Caco-2 (cell line): ENCODE measurements at regions of chr1 and their contacts with region 1.

Region 1: DNA sequence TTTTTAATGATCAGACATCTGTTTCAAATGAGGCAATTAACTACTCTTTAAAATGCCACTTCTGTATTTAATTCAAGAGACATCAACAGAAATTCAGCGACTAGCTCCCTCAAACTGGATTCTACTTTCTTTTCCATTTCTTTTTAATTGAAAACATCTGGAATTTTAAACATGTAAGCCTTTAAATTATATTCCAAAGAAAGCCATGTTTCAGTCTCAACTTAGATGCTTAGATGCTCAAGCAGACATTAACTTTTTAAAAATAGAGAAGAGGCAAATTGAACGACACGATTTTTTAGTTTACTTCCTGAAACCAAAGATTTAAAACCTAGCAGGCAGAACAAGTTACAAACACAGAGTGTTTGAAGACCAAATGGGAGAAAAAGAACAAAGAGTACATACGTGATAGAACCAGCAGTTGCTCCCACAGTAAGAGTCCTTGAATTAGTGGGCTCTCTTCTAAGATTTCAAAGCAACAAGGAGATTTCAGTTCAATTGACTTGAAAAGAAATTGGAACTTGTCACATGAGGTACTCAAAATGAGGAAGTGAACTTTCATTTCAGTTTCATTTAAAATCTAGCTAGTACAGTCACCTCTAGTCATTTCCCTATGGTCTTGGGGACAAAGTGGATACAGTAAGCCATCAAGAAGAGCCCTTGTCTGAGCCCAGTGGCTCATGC is at the start of gene CTSS:
- DNase-seq: no peak
- H3K4me3 ChIP-seq: no peak within 1 kb of the TSS
- H3K4me3 Mint-ChIP-seq: peak within 1 kb of the TSS; percentile 5
- H3K27ac Mint-ChIP-seq: no peak within 1 kb of the TSS
- H3K4me1 ChIP-seq: no peaks in the 10 kb centered on the region
- H3K4me1 Mint-ChIP-seq: no peaks in the 10 kb centered on the region
- H3K27me3 ChIP-seq: no peaks in the 10 kb centered on the region
- H3K27me3 Mint-ChIP-seq: no peaks in the 10 kb centered on the region
- CTCF ChIP-seq: no peak
- total RNA-seq, gene CTSS: 0.84 and 1.3 TPM in 2 replicates

Region 2: DNA sequence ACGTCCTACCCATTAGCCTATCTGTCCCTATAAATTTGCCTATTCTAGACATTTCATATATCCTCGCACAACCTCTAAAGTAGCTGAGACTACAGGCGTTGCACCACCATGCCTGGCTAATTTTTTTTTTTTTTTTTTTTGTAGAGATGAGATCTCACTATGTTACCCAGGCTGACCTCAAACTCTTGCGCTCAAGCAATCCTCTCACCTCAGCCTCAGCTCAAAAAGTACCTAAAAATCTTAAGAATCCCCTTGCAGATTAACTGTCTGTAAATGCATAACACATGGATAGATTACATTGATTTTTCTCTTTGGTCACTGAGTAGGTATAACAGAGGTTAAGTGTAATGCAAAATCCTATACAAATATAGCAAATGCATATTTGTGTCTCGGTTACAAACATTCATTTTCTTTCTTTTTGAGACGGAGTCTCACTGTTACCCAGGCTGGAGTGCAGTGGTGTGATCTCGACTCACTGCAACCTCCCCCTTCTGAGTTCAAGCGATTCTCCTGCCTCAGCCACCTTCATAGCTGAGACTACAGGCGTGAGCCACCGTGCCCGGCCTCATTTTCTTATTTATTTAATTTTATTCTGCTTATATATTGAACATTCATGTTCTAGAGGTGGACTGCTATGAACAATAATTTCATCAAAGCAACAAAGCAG is 47.1 kb before region 1 on chr1:
- CTCF ChIA-PET with region 1: no interaction called
- POLR2A ChIA-PET with region 1: no interaction called
- intact Hi-C with region 1: loop called (anchors 10 kb)
- DNase-seq: no peak
- H3K4me3 ChIP-seq: no peak overlapping the region
- H3K4me3 Mint-ChIP-seq: no peak overlapping the region
- H3K27ac Mint-ChIP-seq: no peak overlapping the region
- H3K4me1 ChIP-seq: no peaks in the 10 kb centered on the region
- H3K4me1 Mint-ChIP-seq: no peaks in the 10 kb centered on the region
- H3K27me3 ChIP-seq: no peaks in the 10 kb centered on the region
- H3K27me3 Mint-ChIP-seq: no peaks in the 10 kb centered on the region
- CTCF ChIP-seq: no peak

Region 3: DNA sequence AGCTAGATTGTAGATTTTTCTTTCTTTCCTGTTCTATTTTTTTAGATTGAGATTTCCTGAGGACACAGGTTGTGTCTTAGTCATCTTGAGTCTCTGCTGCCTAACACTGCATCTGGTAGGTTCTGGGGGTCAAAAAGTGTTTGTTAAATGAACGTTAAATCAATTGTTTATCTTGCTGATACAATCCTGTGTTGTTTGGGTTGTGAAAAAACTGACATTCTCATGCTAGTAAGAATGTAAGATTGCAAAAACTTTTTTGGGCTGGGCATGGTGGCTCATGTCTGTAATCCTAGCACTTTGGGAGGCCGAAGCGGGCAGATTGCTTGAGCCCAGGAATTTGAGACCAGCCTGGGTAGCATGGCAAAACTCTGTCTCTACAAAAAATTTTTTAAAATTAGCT is 39.2 kb after region 1 on chr1:
- CTCF ChIA-PET with region 1: no interaction called
- POLR2A ChIA-PET with region 1: no interaction called
- intact Hi-C with region 1: no loop called
- DNase-seq: no peak
- H3K4me3 ChIP-seq: no peak overlapping the region
- H3K4me3 Mint-ChIP-seq: no peak overlapping the region
- H3K27ac Mint-ChIP-seq: no peak overlapping the region
- H3K4me1 ChIP-seq: peaks cover 5% of the 10 kb centered on the region; the same call in 1 of the 2 replicates
- H3K4me1 Mint-ChIP-seq: peaks cover 18% of the 10 kb centered on the region
- H3K27me3 ChIP-seq: no peaks in the 10 kb centered on the region
- H3K27me3 Mint-ChIP-seq: no peaks in the 10 kb centered on the region
- CTCF ChIP-seq: no peak